Posterior cingulate gyrus (tissue), 11 donors: ENCODE measurements at regions of chr7 and their contacts with region 1.

Region 1: DNA sequence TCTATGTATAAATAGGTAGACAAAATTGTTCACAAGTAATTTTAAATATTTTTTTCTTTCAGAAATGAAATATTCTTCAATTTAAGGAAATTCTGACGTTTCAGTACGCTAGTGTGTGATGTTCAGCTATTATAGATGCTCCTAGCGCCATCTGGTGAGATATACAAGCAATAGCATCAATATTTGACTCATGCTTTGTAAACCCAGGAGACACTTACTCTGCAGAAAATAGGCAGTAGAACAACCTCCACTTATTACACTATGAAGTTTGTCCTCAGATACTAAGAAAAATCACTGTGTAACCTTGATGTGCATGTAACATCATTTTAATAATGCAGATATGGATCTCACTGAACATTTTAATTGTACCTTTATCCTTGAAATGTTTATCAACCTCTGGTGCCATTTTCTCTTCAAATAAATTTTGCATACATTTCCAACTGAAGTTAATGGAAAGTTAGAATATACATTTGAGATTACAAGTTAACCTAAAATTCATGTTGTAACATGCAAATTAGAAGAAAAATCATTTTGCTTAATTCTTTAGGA is 151.5 kb upstream of the FAM3C start:
- DNase-seq: no peak

Region 2: DNA sequence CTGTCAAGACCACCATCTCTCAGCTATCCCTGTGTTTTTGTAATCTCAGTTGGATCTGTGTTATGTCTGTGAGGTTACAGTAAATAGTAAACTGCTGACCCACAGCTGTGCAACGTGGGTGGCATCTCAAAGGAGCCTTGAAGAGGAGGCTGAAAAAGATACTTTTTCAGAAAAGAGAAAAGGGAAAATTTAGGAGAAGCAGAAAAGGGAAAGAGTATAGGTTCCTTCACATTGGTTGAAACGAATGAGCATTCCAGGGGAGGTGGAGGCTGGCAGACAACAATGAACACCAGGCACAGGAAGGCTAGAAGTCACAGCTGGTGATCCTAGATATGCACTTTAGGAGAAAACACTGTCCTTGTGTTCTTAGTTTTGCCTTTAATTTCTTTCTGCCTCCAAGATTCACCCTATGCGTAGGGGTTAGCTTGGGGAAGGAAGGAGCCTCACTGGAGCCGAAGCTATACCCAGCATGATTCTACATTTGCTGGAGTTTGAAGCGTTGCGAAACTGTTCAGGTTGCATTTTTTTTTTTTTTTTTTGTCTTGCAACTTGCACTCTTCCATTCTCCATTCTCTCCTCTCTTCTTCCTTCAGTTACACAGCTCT is 540.8 kb before region 1 on chr7:
- intact Hi-C with region 1: no loop called
- DNase-seq: no peak

Region 3: DNA sequence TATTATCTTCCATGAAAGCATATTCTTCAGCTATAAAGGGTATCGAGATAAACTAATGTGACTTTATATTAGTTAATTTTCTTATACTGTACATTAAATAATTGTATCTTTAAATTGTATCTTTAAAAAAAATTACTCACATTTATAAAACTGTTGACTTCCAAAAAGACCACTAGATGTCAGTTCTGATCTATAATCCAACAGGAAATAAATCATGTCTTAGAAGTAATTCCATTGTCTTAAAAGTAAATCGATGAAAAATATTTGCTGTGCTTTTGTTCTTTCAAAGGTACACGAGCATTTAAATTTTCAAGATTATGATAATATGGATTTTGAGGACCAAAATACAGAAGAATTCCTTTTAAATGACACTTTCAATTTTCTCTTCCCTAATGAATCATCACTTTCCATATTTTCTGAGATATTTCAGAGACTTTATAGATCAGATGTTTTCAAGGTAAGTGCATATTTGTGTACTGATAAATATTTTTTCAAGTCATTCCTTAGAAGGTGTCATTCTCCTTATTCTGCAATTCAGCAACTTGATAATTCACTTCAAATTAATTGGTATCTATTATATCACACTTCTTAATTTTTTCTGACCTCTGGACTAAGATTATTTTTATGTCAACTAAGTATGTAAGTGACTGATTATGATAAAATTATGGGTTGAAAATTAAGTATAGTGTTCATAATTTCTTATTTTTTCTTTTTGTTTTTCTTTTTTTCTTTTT is 420.6 kb before region 1 on chr7:
- intact Hi-C with region 1: loop called (anchors 5 kb)
- DNase-seq: no peak

Region 4: GRCh38 chr7:121366852-121367431 is 180.7 kb before region 1 on chr7:
- intact Hi-C with region 1: loop called (anchors 1 kb)
- DNase-seq: no peak